ENCODE measurements at regions of chr2 and their contacts with region 1.

Region 1: GRCh38 chr2:230160112-230160660 is 59.6 kb downstream of the SP110 start:
- DNase-seq: peak; percentile 66
- H3K4me3 Mint-ChIP-seq: no peak overlapping the region
- H3K27ac Mint-ChIP-seq: no peak overlapping the region
- H3K4me1 Mint-ChIP-seq: peaks cover 3% of the 10 kb centered on the region
- H3K27me3 Mint-ChIP-seq: no peaks in the 10 kb centered on the region

Region 2: DNA sequence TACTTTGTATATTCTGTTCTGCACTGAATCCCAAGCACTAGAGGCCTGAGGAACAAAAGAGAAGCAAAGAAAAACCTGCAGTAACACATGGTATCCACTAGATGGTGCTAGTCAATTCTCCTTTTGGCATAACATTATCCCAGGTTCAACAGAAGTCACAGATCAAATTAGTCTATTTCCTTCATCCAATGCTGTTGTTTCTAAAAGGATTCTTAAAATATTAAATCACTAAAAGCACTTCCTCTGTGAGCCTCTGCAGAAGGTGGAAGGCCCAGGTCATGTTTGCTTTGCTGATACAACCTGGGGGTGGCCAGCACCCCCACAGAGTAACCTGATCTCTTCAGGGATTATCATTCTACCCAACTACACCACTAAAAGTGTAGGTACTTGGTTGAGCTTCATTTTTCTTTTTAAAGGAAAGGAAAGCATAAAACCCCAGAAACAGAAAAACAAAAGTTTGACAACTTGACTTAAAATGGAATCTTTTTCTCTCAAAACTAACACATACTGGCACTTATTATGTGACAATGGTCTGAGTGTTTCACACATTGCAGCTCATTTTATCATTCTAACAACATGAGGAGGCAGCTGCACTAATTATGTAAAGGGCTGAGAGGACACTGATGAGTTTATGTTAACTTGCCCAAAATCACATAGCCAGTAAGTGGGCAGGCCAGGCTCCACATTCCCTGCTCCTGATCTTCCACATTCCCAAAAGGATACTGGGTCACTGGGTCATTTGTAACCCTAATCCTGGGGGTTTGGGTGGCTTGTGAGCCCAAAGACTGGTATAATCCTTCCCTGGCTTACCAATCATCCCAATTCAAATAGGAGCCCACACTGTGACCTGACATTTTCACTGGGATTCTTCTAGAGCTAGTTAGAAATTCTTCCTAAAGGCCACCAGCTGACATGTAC is 379.1 kb before region 1 on chr2:
- CTCF ChIA-PET with region 1: interaction called, 4 read pairs
- intact Hi-C with region 1: loop called (anchors 1 kb)
- DNase-seq: no peak
- H3K4me3 Mint-ChIP-seq: no peak overlapping the region
- H3K27ac Mint-ChIP-seq: no peak overlapping the region
- H3K4me1 Mint-ChIP-seq: peaks cover 11% of the 10 kb centered on the region
- H3K27me3 Mint-ChIP-seq: no peaks in the 10 kb centered on the region

Region 3: DNA sequence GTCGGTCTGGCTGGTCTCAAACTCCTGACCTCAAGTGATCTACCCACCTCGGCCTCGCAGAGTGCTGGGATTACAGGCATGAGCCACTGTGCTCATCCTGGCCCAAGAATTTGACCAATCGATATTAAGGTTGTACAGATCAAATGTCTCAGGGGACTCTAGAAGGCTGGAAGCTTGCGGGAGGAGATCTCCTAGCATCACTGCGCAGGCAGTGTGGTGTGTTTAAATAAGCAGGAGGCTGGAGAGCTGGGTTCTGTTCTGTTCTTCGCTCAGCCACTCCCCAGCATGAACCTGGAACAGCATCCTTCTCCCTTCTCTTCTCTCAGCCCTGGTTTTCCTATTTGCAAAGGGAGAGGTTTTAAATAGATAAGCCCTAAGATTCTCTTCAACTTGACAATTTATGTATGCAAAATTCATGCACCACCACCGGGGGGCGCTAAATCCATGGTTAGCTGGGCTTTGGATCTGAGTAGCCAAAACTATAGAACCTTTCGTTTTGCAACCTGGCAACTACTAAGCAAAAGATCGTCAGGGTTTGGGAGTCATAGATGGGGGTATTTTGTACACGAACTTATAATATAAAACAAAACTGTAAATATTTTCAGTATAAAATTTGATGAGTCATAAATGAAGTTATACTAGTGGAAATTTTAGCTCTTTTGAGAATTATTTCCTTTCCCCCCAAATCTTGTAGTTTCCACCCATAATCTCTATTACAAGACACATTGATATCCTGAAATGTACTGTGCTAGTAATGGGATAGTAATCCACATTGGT is 152.1 kb before region 1 on chr2:
- CTCF ChIA-PET with region 1: interaction called, 37 read pairs
- intact Hi-C with region 1: loop called (anchors 1 kb)
- DNase-seq: peak; percentile 95
- H3K4me3 Mint-ChIP-seq: no peak overlapping the region
- H3K27ac Mint-ChIP-seq: no peak overlapping the region
- H3K4me1 Mint-ChIP-seq: peaks cover 5% of the 10 kb centered on the region
- H3K27me3 Mint-ChIP-seq: no peaks in the 10 kb centered on the region

Region 4: GRCh38 chr2:230124757-230125431 is 35.3 kb before region 1 on chr2:
- CTCF ChIA-PET with region 1: interaction called, 11 read pairs
- intact Hi-C with region 1: no loop called
- DNase-seq: no peak
- H3K4me3 Mint-ChIP-seq: no peak overlapping the region
- H3K27ac Mint-ChIP-seq: no peak overlapping the region
- H3K4me1 Mint-ChIP-seq: peaks cover 10% of the 10 kb centered on the region
- H3K27me3 Mint-ChIP-seq: no peaks in the 10 kb centered on the region

Region 5: GRCh38 chr2:230144355-230144754 is 15.8 kb before region 1 on chr2:
- CTCF ChIA-PET with region 1: interaction called, 13 read pairs
- intact Hi-C with region 1: no loop called
- DNase-seq: no peak
- H3K4me3 Mint-ChIP-seq: no peak overlapping the region
- H3K27ac Mint-ChIP-seq: no peak overlapping the region
- H3K4me1 Mint-ChIP-seq: no peaks in the 10 kb centered on the region
- H3K27me3 Mint-ChIP-seq: no peaks in the 10 kb centered on the region

Region 6: DNA sequence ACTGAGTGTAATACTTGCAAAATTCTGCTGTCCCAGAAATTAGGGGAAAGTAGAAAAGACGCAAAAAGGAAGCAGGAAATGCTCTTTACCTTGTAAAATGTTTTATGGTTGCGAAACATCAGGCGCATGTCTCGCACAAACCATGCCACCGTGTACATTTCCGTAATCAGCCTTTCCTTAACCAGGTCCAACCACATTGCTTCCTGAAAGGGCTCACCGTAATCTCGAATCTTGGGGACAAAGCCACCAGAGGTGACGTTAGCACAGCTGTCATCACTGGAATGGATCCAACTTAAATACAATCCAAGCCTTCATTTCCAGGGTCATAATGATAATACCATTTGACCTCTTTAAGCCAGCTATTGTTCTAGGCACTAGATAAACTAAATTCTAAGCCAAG is 10.3 kb after region 1 on chr2:
- CTCF ChIA-PET with region 1: interaction called, 13 read pairs
- intact Hi-C with region 1: no loop called
- DNase-seq: peak; percentile 49
- H3K4me3 Mint-ChIP-seq: no peak overlapping the region
- H3K27ac Mint-ChIP-seq: peak overlapping the region; percentile 27
- H3K4me1 Mint-ChIP-seq: peaks cover 16% of the 10 kb centered on the region
- H3K27me3 Mint-ChIP-seq: no peaks in the 10 kb centered on the region

Measured in activated naive CD4-positive, alpha-beta T cell treated with anti-CD3 and anti-CD28 coated beads for 36 hours (primary cell).